ENCODE measurements at regions of chr4 and their contacts with region 1.

Region 1: DNA sequence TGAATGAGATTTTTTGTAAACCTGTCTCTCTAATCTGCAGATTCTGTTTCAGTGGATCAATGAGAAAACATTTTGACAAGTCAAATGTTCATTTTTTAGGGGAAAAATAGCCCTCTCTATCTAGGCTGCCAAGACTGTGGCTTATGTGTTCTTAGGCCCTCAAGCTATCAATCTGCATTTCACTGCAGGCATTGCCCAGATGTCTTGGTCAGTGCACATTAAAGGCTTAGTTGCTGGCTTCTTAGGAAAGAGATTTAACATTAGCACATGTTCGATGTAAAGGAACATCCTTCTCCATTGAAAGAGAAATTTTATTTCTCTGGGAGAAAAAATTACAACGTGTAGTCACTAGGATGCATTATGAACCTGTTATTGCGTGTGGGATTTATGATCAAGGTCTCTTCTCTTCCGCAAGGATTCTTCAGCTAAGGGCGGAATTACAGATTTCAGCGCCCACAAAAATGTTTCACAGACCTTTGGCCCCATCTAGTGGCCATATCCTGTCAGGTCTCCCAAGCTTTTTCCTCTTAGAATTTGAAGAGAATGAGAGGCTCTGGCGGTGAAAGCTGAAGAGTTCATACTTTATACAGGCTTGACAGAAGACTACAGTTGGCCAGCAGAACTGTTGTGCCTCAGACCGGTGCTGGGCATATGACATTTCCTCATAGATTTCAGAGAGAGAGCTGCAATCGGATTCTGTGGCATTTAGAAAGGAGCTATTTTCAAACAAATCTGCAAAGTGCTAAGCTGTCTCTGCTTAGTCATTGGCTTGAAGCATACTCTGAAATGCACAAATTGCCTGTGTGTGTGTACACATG is 144.6 kb upstream of the NOCT start:
- DNase-seq: peak in 1 of 2 donors; percentile 58
- ATAC-seq: peak in 7 of 8 donors; percentile 64 to 76 (median 69)
- H3K4me3 ChIP-seq: no peak overlapping the region
- H3K27ac ChIP-seq: no peak overlapping the region
- H3K4me1 ChIP-seq: peaks cover 0 to 7% (median 0%) of the 10 kb centered on the region in 9 donors
- H3K27me3 ChIP-seq: peaks cover 0 to 22% (median 8%) of the 10 kb centered on the region in 7 donors
- CTCF ChIP-seq: peak; percentile 66 to 88 (median 87)

Region 2: DNA sequence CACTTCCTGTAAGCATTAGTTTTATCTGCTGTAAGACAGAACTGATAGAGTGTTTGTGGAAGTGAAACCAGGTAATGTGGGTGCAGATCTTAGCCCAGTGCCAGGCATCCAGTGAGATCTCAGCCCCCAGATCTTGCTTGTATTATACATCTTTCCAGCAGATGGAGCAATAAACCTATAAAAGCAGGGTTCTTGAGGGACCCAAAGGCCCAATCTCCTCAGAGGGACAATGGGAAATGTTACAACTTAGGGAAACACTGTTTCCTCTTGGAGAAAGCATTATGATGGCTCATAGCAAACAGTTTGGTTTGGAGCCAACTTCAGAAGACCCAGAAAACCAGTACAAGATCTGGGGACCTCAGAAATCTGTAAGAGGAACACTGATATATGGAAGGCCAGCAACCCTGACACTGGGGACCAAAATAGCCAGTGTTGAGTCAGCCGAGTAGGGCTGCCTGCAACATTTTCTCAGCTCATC is 835.1 kb before region 1 on chr4:
- intact Hi-C with region 1: loop called in 8 of 10 experiments (anchors 2 to 10 kb)
- DNase-seq: peak in 1 of 2 donors; percentile 11
- ATAC-seq: peak; percentile 77 to 91 (median 84)
- H3K4me3 ChIP-seq: no peak overlapping the region
- H3K27ac ChIP-seq: no peak overlapping the region
- H3K4me1 ChIP-seq: peaks cover 0 to 8% (median 0%) of the 10 kb centered on the region in 9 donors
- H3K27me3 ChIP-seq: no peaks in the 10 kb centered on the region
- CTCF ChIP-seq: peak in 8 of 9 donors; percentile 19 to 76 (median 62)

Region 3: GRCh38 chr4:138182838-138183426 is 688.0 kb before region 1 on chr4:
- intact Hi-C with region 1: loop called in 3 of 10 experiments (anchors 5 to 10 kb)
- DNase-seq: peak in 1 of 2 donors; percentile 23
- ATAC-seq: peak in 5 of 8 donors; percentile 49 to 78 (median 64)
- H3K4me3 ChIP-seq: no peak overlapping the region
- H3K27ac ChIP-seq: no peak overlapping the region
- H3K4me1 ChIP-seq: peaks cover 0 to 21% (median 15%) of the 10 kb centered on the region in 9 donors
- H3K27me3 ChIP-seq: no peaks in the 10 kb centered on the region
- CTCF ChIP-seq: peak; percentile 24 to 78 (median 68)

Region 4: GRCh38 chr4:138555584-138555983 is 315.4 kb before region 1 on chr4:
- intact Hi-C with region 1: no loop called
- DNase-seq: no peak
- ATAC-seq: no peak
- H3K4me3 ChIP-seq: no peak overlapping the region
- H3K27ac ChIP-seq: no peak overlapping the region
- H3K4me1 ChIP-seq: no peaks in the 10 kb centered on the region
- H3K27me3 ChIP-seq: no peaks in the 10 kb centered on the region
- CTCF ChIP-seq: no peak

Region 5: DNA sequence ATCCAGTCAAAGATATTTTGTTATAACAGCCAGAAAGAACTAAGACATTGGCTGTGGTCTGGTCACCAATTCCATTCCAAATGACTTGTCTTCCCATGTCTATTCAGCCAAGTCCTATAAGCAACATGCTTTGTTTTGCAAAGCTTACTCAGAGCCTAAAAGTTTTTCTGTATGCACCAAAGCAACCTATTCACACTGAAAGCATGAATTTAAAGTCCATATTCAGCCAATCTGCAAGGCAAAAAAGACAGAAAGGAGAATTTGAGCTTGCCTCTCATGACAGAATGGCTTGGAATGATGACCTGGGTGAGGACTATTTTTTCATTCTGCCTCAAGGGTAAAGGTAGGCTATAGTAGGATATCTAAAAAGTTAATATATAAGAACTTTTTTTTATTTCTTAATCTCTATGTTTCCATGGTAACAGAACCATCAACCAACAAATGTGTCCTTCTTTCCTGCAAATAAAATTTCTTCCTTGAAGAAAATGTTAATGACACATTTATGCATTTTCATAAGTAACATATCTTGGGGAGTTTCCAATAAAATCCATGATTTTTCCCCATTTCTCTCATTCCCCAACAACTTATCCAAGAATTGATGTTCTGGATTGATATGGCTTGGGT is 178.4 kb before region 1 on chr4:
- intact Hi-C with region 1: loop called in 6 of 10 experiments (anchors 5 to 10 kb)
- DNase-seq: no peak
- ATAC-seq: no peak
- H3K4me3 ChIP-seq: no peak overlapping the region
- H3K27ac ChIP-seq: no peak overlapping the region
- H3K4me1 ChIP-seq: no peaks in the 10 kb centered on the region
- H3K27me3 ChIP-seq: peaks cover 0 to 9% (median 0%) of the 10 kb centered on the region in 7 donors
- CTCF ChIP-seq: no peak

Region 6: GRCh38 chr4:138851391-138852335 is 19.3 kb before region 1 on chr4:
- intact Hi-C with region 1: no loop called
- DNase-seq: no peak
- ATAC-seq: no peak
- H3K4me3 ChIP-seq: no peak overlapping the region
- H3K27ac ChIP-seq: no peak overlapping the region
- H3K4me1 ChIP-seq: no peaks in the 10 kb centered on the region
- H3K27me3 ChIP-seq: peaks cover 0 to 13% (median 0%) of the 10 kb centered on the region in 7 donors
- CTCF ChIP-seq: no peak

Region 7: GRCh38 chr4:138909587-138909986 is 38.6 kb after region 1 on chr4:
- intact Hi-C with region 1: no loop called
- DNase-seq: no peak
- ATAC-seq: no peak
- H3K4me3 ChIP-seq: no peak overlapping the region
- H3K27ac ChIP-seq: no peak overlapping the region
- H3K4me1 ChIP-seq: peaks cover 5 to 24% (median 14%) of the 10 kb centered on the region in 9 donors
- H3K27me3 ChIP-seq: no peaks in the 10 kb centered on the region
- CTCF ChIP-seq: no peak

Region 8: GRCh38 chr4:139144161-139144859 is 273.4 kb after region 1 on chr4:
- intact Hi-C with region 1: no loop called
- DNase-seq: peak; percentile 18 to 34
- ATAC-seq: peak in 7 of 8 donors; percentile 26 to 70 (median 57)
- H3K4me3 ChIP-seq: no peak overlapping the region
- H3K27ac ChIP-seq: peak overlapping the region in 1 of 10 donors; percentile 14
- H3K4me1 ChIP-seq: peaks cover 21 to 57% (median 43%) of the 10 kb centered on the region in 9 donors
- H3K27me3 ChIP-seq: no peaks in the 10 kb centered on the region
- CTCF ChIP-seq: no peak

Measured in heart right ventricle (tissue), 16 donors.